OCI-LY7 (cell line): ENCODE measurements at regions of chr6 and their contacts with region 1.

Region 1: DNA sequence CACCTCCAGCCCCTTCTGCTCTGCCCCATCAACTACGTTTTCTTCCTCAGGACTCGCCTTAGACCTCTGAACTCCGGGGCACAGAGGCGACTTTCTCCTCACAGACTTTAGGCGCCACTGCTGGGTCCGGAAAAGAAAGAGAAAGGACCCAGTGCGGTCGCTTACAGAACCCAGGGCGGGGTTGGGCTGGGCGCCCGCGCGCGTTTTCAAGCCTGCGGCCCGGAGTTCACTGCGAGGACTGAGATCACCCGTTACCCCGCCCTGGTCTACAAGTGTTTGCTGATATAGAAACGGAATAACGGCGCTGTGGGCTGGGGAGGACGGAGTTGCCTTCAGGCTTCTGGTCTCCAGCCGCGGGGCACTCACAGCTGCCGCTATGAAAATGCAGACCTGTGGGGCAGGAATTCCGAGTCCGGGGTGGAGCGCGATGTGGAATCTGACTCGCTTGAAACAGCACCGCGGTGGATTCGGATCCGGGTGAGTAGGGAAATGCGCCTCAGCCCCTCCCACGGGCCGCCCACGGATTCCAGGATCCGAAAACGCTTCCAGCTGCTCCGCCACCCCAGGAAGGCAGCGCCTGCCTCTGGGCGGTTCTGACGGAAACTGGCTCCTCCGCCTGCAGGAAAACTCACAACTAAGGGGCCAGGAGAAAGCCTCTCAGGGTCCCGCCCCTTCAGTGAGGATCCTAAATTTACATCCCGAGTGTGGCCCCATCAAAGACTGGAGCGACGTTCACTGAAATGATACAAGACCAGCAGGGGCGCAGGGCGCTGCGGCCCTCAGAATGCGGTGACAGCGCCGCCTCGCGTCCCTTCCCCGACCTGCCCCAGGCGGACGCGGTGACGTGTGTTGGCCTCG is 29.4 kb downstream of the HLA-F start:
- DNase-seq: peak; percentile 90
- H3K4me3 ChIP-seq: peak overlapping the region; percentile 92
- H3K27ac ChIP-seq: peak overlapping the region; percentile 73
- H3K4me1 ChIP-seq: peaks cover 24% of the 10 kb centered on the region
- CTCF ChIP-seq: peak; percentile 93

Region 2: DNA sequence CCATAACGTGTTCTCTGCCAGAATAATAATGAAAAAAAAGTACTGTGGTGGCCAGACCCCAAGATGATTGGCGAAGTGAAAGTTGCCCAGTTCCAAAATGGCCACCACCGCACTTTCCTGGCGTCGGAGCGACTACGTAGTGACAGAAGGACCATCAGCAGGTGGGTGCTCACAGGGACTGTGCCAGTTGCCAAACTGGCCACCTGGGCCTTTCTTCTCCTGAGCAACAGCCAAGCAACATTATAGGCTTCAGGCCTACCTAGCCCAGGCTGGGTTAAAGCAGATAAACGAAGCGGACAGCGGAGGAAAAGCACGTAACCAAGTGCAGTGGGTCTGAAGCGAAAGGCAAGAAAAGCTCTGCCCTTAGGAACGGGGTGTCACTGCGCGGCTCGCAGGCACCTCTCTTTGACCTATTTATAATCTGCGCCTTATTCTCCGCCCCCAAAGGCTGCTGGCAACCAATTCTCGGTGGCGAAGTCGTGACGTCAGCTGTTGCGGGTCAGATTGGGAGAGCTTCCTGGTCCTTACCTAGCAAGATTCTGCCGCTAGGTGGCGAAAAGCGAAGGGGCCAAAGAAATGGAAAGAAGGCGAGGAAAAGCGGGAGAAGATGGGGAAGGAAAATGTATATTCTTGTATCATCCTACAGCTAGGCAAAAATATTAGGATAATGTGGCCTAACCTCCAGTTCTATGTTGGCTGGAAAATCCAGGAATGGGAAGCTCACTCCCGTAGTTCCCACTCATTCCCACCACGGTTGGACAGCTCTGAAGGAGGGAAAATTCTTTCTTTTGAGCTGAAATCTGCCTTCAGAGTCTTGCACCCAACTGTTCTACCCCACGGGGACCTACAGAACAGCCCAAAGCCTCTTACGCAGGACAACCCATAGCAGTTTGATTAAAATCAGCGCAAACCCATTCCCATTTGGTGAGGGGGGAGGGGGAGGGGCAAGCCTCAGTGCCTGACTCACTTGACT is 102.7 kb before region 1 on chr6:
- CTCF ChIA-PET with region 1: interaction called, 15 read pairs
- POLR2A ChIA-PET with region 1: no interaction called
- intact Hi-C with region 1: loop called (anchors 2 kb)
- DNase-seq: peak; percentile 98
- H3K4me3 ChIP-seq: peak overlapping the region; percentile 63
- H3K27ac ChIP-seq: peak overlapping the region; percentile 49
- H3K4me1 ChIP-seq: peaks cover 10% of the 10 kb centered on the region
- CTCF ChIP-seq: peak; percentile 92

Region 3: GRCh38 chr6:29705389-29706231 is 47.1 kb before region 1 on chr6:
- CTCF ChIA-PET with region 1: no interaction called
- POLR2A ChIA-PET with region 1: no interaction called
- intact Hi-C with region 1: loop called (anchors 1 kb)
- DNase-seq: peak; percentile 27
- H3K4me3 ChIP-seq: no peak overlapping the region
- H3K27ac ChIP-seq: no peak overlapping the region
- H3K4me1 ChIP-seq: peaks cover 13% of the 10 kb centered on the region
- CTCF ChIP-seq: peak; percentile 80

Region 4: GRCh38 chr6:29737707-29738630 is 14.7 kb before region 1 on chr6:
- CTCF ChIA-PET with region 1: no interaction called
- POLR2A ChIA-PET with region 1: interaction called, 4 read pairs
- intact Hi-C with region 1: loop called (anchors 2 kb)
- DNase-seq: peak; percentile 72
- H3K4me3 ChIP-seq: no peak overlapping the region
- H3K27ac ChIP-seq: no peak overlapping the region
- H3K4me1 ChIP-seq: no peaks in the 10 kb centered on the region
- CTCF ChIP-seq: peak; percentile 89